ENCODE measurements at regions of chr14 and their contacts with region 1.

Region 1: DNA sequence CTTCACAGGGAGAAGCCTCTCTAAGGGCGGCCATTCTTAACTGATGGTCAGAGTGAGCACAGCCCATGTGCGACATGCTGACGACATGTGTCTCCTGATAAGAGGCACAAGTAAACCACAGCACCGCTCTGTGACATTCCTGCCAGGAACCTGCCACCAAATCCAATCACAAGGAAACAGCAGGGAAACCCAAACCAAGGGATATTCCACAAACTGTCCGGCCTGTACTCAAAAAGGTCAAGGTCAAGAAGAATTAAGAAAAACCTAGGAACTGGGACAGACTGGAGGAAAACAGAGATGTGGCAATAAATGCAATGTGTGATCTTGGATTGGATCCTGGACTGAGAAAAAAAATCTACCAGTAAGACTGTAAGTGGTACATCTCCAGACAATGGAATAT is 91.9 kb downstream of the SYNE3 start:
- DNase-seq: no peak
- ATAC-seq: no peak
- H3K4me3 ChIP-seq: no peak overlapping the region
- H3K27ac ChIP-seq: no peak overlapping the region
- H3K4me1 ChIP-seq: no peaks in the 10 kb centered on the region
- CTCF ChIP-seq: no peak
- EP300 ChIP-seq: no peak
- POLR2A ChIP-seq: no peak
- RAD21 ChIP-seq: no peak

Region 2: DNA sequence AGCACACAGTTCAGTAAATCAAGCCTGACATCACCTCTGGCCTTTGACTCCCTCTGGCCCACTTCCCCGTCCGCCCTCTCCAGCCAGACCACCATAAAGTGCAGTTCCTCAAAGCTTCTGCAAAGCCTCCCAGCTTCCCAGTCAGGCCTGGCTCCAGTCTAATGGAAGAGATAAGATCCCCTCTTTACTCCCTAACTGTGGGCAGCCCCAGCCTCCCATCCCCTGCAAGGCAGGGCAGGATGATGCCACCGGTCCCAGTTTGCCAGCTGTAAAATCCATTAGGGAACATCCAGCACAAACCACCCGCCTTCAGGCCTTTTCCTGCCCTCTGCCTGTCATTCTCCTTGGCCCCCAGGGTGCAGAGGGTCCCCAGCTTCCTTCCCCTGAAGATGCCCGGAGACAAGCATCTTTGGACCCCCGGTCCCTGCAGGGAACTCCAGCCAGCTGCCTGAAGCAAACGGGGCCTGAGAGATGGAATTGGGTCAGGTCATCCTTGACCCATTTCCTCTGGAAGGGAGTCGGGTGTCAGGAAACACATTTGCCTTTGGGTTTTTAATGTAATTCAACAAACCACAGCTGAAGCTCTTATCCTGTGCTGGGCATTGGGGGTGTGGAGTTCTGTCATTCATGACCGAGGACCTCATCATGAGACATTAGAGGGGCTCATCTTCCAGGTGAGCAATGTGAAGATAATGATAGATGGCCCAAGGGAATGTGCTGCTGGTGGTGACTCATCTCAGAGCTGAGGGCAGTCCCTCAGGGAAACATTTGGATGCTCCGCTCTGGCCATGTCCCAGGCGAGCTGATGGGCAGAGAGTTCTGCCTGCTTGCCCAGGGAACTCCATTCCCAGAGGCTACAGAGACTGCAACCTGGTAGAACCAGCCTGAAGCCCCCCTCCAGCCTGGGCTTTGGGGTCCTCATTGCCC is 11.0 kb before region 1 on chr14:
- CTCF ChIA-PET with region 1: interaction called, 26 read pairs
- POLR2A ChIA-PET with region 1: no interaction called
- DNase-seq: no peak
- ATAC-seq: peak in 1 of 2 experiments; percentile 25; a peak in 1 of 6 replicates
- H3K4me3 ChIP-seq: no peak overlapping the region
- H3K27ac ChIP-seq: no peak overlapping the region
- H3K4me1 ChIP-seq: no peaks in the 10 kb centered on the region
- CTCF ChIP-seq: no peak
- EP300 ChIP-seq: no peak
- POLR2A ChIP-seq: no peak
- RAD21 ChIP-seq: no peak